PC-3 (cell line): ENCODE measurements at regions of chr5 and their contacts with region 1.

Region 1: DNA sequence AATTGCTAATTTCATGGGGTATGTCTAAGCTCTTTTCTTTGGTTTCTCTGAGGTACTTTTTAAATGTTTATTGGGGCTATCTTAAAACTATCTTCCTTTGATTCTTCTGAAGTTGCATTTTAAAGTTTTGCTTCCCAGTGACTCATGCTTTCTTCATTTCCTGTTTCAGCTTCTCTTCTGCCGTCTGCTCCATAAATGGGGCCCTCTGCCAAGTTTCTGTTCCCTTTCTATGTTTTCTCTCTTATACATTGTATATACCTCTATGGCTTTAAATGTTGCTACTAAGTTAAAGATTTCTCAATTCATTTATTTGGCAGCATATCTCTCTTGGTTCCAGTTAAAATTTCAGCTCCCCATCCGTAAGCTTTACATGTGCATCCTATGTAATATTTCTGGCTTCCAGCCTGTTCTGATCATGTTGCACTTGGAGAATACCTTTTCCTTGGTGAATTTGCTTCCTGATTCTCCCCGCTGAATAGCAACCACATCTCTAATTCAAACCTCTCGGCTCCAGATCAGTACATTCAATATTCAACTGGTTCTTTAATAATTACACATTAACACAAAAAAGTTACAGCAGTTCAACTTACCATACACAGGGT is 125.3 kb downstream of the ST8SIA4 start:
- DNase-seq: peak; percentile 88
- ATAC-seq: peak; percentile 88
- H3K4me3 ChIP-seq: peak overlapping the region; percentile 19; the same call in 1 of the 2 replicates
- H3K27ac ChIP-seq: peak overlapping the region; percentile 87
- H3K4me1 ChIP-seq: peaks cover 29% of the 10 kb centered on the region
- H3K27me3 ChIP-seq: no peaks in the 10 kb centered on the region
- CTCF ChIP-seq: no peak

Region 2: GRCh38 chr5:100634937-100635534 is 142.7 kb before region 1 on chr5:
- CTCF ChIA-PET with region 1: interaction called, 3 read pairs
- POLR2A ChIA-PET with region 1: no interaction called
- intact Hi-C with region 1: loop called (anchors 5 kb)
- DNase-seq: peak; percentile 85
- ATAC-seq: peak; percentile 96
- H3K4me3 ChIP-seq: no peak overlapping the region
- H3K27ac ChIP-seq: peak overlapping the region; percentile 38
- H3K4me1 ChIP-seq: peaks cover 15% of the 10 kb centered on the region
- H3K27me3 ChIP-seq: no peaks in the 10 kb centered on the region
- CTCF ChIP-seq: no peak

Region 3: DNA sequence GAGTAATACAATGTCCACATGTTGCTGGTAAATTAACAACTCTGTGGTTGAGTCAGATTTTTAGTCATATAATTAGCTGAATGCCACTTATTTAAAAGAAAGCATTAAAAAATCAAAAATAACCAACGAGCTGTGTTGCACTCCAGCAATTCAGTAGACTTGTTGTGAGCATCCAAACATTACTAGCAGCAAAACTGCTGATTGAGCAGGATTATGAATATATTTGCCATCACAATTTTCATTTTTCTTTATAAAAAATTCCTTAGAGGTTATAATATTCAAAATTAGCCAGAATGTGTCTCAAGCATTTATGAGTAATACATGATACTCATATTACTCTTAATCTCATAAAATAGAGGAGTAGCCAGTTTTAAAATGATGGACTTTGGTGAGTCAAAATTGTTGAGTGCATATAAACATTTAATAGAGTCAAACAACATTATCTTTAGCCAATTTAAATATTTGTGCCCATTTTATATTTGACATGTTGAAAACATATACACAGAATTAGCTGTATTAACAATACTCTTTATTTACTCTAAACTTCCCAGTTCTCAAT is 81.3 kb after region 1 on chr5:
- CTCF ChIA-PET with region 1: interaction called, 4 read pairs
- POLR2A ChIA-PET with region 1: no interaction called
- intact Hi-C with region 1: loop called (anchors 1 kb)
- DNase-seq: peak; percentile 79
- ATAC-seq: peak; percentile 96
- H3K4me3 ChIP-seq: peak overlapping the region; percentile 15; the same call in 1 of the 2 replicates
- H3K27ac ChIP-seq: peak overlapping the region; percentile 43
- H3K4me1 ChIP-seq: peaks cover 17% of the 10 kb centered on the region
- H3K27me3 ChIP-seq: no peaks in the 10 kb centered on the region
- CTCF ChIP-seq: no peak

Region 4: DNA sequence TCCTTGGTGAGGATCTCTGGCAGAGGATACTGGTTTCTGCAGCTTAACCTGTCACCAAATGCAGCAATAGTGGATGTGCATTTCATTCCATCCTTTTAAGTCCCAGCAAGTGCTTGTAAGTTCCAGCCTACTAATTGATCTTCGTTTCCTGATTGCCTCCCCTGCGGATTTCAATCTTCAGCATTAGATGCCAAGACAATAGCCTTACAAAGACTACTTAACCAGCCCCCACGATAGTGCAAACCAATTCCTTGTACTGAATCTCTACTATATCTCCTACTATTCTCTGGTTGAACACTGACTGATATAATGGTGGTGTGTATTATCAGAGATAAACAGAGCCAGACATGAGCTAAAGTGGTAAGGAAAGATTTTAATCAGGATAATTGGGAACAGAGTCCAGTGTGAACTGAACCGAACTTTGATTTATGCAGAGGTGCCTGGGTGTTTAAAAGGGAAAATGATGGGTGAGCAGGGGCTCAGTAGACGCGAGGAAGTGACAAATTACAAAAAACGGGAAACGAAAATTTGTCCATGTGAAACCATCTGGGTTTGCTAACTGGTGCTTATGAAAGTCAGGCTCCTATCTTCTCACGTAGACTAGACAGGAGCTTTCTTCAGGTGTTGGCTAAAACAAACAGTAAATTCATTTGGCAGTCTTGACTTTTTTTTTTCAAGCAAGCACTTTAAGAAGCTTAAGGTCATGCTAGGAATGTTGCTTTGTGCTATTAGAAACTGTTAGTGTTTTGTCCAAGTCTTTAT is 232.2 kb after region 1 on chr5:
- CTCF ChIA-PET with region 1: no interaction called
- POLR2A ChIA-PET with region 1: no interaction called
- intact Hi-C with region 1: loop called (anchors 10 kb)
- DNase-seq: no peak
- ATAC-seq: no peak; the same call in 1 of the 2 replicates
- H3K4me3 ChIP-seq: no peak overlapping the region
- H3K27ac ChIP-seq: no peak overlapping the region
- H3K4me1 ChIP-seq: no peaks in the 10 kb centered on the region
- H3K27me3 ChIP-seq: no peaks in the 10 kb centered on the region
- CTCF ChIP-seq: no peak

Region 5: DNA sequence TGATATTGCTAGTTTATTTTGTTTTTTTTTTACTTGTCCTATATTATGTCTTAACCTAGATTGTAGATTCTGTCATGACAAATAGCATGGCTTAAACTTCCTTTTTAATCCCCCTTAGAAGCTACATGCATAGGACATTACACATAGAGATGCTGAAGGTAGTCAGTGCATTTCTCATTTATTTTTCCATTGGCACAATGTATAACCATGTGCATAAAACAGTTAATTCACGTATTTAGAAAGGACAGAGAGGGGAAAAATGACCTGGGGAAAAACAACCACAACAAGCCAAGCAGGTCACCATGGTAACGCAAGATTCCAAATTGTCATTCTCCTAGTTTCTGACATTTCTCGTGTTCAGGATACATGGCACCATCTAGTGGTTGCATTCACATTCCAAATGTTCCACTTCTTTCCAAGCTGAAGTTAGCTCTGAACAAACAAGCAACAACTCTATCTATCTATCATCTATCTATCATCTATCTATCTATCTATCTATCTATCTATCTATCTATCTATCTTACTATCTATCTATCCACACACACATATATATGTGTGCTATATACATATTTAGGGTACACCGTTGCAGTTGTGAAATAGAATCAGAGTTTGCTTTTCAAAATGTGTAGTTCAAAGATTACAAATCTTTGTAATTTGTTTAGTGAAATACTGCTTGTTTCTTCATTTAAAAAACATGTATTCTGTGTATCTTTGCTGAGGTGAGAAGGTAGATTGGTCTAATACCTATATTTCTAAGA is 612.5 kb after region 1 on chr5:
- CTCF ChIA-PET with region 1: no interaction called
- POLR2A ChIA-PET with region 1: no interaction called
- intact Hi-C with region 1: loop called (anchors 10 kb)
- DNase-seq: peak; percentile 71
- ATAC-seq: peak; percentile 49
- H3K4me3 ChIP-seq: no peak overlapping the region
- H3K27ac ChIP-seq: no peak overlapping the region
- H3K4me1 ChIP-seq: no peaks in the 10 kb centered on the region
- H3K27me3 ChIP-seq: no peaks in the 10 kb centered on the region
- CTCF ChIP-seq: peak; percentile 82